ENCODE measurements at regions of chr19 and their contacts with region 1.

Region 1: DNA sequence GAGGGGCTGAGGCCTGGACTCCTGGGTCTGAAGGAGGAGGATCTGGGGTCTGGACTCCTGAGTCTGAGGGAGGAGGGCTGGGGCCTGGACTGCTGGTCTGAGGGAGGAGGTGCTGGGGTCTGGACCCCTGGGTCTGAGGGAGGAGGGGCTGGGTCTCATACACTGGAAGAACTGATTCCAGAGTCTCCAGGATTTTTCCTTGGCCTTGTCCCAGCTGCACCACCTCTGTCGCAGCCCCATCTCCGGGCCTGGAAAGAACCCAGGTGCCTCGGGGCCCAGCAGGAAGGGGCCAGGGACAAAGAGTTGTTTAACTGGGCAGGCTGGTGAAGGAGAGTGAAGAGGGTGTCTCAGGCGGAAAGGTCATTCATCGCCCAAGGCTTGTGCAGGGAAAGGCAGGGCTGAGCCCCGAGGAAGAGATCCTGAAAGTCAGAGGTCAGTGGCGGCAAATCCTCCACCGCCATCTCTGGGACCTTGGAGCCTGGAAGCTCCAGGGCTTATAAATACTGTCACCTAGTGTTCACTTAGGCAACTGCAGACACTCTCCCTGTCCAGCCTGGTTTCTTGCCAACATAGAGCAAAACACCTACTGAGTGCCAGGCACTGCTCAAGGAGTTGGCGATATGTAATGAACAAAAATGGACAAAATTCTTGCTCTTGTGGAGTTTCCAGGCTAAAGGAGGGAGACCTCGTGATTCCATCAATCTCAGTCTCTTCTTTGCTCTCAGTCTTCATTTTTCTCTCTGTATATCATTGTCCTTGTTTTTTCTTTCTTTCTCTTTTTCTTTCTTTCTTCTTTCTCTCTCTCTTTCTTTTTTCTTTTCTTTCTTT is 4.4 kb upstream of the KCNN4 start:
- DNase-seq: peak in 9 of 10 donors; percentile 24 to 73 (median 59)
- ATAC-seq: peak; percentile 28 to 37
- H3K4me3 Mint-ChIP-seq: peak overlapping the region; percentile 38 to 85 (median 73)
- H3K27ac Mint-ChIP-seq: peak overlapping the region; percentile 89 to 99 (median 96)
- H3K4me1 Mint-ChIP-seq: peaks cover 27 to 42% (median 41%) of the 10 kb centered on the region in 4 donors
- H3K27me3 Mint-ChIP-seq: peaks cover 0 to 14% (median 11%) of the 10 kb centered on the region in 5 donors

Region 2: DNA sequence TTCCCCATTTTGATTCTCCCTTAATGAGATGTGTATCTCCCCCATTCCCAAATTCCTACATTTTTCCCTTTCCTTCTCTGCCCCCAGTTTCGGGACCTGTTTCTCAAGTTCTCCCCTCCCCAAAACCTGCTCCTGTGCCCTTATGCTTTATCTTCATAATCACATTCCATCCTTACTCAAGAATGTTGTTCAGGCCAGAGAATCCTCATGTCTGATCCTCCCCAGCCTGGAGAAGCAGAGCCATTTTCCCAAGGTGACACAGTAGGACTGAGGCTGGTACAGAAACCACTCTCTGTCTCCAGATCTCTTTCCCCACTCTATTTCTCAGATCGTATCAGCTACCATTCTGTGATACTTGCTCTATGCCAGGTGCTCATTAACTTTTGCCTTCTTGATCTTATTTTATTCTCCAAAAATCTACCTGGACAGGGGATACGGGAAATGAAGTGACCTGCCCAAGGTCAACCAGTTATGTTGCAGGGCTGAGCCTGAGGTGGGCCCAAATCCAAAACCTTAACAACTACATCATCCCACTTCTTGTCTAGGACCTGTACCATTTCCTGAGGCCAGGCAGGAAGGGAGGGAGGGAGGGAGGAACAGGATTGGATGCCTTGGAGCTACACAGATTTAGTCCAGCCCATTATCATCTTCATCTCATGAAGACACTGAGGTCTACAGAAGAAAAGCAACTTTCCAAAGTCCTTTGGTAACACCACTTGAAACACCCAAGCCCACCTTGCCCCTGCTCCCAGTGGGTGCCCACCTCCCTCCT is 41.0 kb before region 1 on chr19:
- POLR2A ChIA-PET with region 1: interaction called, 20 read pairs
- DNase-seq: no peak
- ATAC-seq: no peak
- H3K4me3 Mint-ChIP-seq: no peak overlapping the region
- H3K27ac Mint-ChIP-seq: peak overlapping the region in 3 of 10 donors; percentile 14 to 90 (median 49)
- H3K4me1 Mint-ChIP-seq: peaks cover 6 to 19% (median 8%) of the 10 kb centered on the region in 4 donors
- H3K27me3 Mint-ChIP-seq: no peaks in the 10 kb centered on the region

Region 3: GRCh38 chr19:43754503-43755255 is 30.5 kb before region 1 on chr19 and contains the start of gene SMG9:
- POLR2A ChIA-PET with region 1: interaction called, 30 read pairs
- DNase-seq: peak; percentile 97 to 100 (median 99)
- ATAC-seq: peak; percentile 84 to 87
- H3K4me3 Mint-ChIP-seq: peak within 1 kb of the TSS; percentile 91 to 99 (median 96)
- H3K27ac Mint-ChIP-seq: peak within 1 kb of the TSS; percentile 91 to 99 (median 99)
- H3K4me1 Mint-ChIP-seq: peaks cover 17 to 51% (median 40%) of the 10 kb centered on the region in 4 donors
- H3K27me3 Mint-ChIP-seq: peaks cover 0 to 4% (median 0%) of the 10 kb centered on the region in 5 donors
- polyA plus RNA-seq, gene SMG9: 3.4 to 8.3 (median 8.3) TPM

Region 4: GRCh38 chr19:43765109-43765876 is 19.9 kb before region 1 on chr19:
- POLR2A ChIA-PET with region 1: interaction called, 70 read pairs
- DNase-seq: peak in 4 of 10 donors; percentile 30 to 67 (median 40)
- ATAC-seq: peak; percentile 75 to 83
- H3K4me3 Mint-ChIP-seq: peak overlapping the region; percentile 16 to 75 (median 53)
- H3K27ac Mint-ChIP-seq: peak overlapping the region; percentile 82 to 95 (median 90)
- H3K4me1 Mint-ChIP-seq: peaks cover 24 to 47% (median 35%) of the 10 kb centered on the region in 4 donors
- H3K27me3 Mint-ChIP-seq: no peaks in the 10 kb centered on the region